IMR-90 (cell line): ENCODE measurements at regions of chr10 and their contacts with region 1.

Region 1: GRCh38 chr10:86755740-86756510 is 494 bp upstream of the BMPR1A start:
- DNase-seq: peak; percentile 82
- ATAC-seq: peak; percentile 91
- H3K4me3 ChIP-seq: peak overlapping the region; percentile 74
- H3K27ac ChIP-seq: peak overlapping the region; percentile 98
- H3K4me1 ChIP-seq: peaks cover 2% of the 10 kb centered on the region; the same call in 1 of the 2 replicates
- H3K27me3 ChIP-seq: no peaks in the 10 kb centered on the region
- CTCF ChIP-seq: no peak
- POLR2A ChIP-seq: peak; percentile 83
- RAD21 ChIP-seq: no peak

Region 2: DNA sequence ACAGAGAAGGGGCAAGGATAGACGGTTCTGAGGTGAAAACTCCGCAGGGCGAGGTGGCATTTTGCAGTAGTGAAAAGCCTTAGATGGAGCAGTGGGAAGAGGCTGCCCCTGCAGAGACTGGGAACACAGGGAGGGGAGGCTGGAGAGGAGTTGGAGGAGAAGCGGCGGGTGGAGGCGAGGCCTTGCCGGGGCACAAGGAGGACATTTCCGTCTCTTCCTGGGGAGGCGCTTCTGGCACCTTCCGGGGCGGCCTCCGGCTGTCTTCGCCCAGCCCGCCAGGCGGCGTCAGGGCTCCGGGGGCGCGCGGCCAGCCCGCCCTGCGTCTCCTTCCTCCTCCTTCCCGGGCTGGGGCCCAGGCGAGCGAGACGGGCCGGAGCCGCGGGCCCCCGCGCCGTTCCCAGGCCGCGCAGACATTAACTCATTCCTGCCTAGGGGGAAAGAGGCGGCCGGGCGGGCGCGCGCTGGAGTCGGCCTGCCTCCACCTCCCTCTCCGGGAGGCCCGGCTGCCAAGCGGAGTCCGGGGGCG is 44.9 kb before region 1 on chr10:
- CTCF ChIA-PET with region 1: no interaction called
- POLR2A ChIA-PET with region 1: no interaction called
- dilution Hi-C with region 1: no loop called
- in situ Hi-C with region 1: no loop called
- intact Hi-C with region 1: loop called (anchors 1 kb)
- DNase-seq: peak; percentile 85
- ATAC-seq: peak; percentile 95
- H3K4me3 ChIP-seq: peak overlapping the region; percentile 51
- H3K27ac ChIP-seq: peak overlapping the region; percentile 71
- H3K4me1 ChIP-seq: peaks cover 8% of the 10 kb centered on the region
- H3K27me3 ChIP-seq: no peaks in the 10 kb centered on the region
- CTCF ChIP-seq: peak; percentile 98
- POLR2A ChIP-seq: peak; percentile 68
- RAD21 ChIP-seq: peak; percentile 87

Region 3: DNA sequence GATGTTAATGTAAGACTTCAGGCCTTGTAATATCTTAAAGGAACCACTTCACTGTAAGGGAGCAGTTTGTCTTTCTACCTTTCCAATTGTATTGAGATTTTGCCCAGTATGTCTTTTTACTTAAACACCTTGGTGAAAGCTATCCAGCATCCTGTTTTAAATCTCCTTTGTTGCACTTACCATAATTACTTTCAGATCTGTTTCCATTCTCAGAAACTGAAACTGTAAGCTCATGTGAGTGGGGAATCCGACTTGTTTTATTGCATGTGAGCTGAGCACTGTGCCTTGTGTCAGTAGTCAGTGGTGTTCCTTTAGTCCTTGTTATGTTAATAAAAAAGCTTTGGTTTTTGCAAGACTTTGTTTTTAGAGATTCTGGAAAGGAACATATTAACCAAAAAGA is 42.7 kb after region 1 on chr10:
- CTCF ChIA-PET with region 1: no interaction called
- POLR2A ChIA-PET with region 1: no interaction called
- dilution Hi-C with region 1: no loop called
- in situ Hi-C with region 1: no loop called
- intact Hi-C with region 1: no loop called
- DNase-seq: peak; percentile 51
- ATAC-seq: no peak
- H3K4me3 ChIP-seq: no peak overlapping the region
- H3K27ac ChIP-seq: no peak overlapping the region
- H3K4me1 ChIP-seq: peaks cover 7% of the 10 kb centered on the region
- H3K27me3 ChIP-seq: no peaks in the 10 kb centered on the region
- CTCF ChIP-seq: no peak
- POLR2A ChIP-seq: no peak
- RAD21 ChIP-seq: no peak

Region 4: GRCh38 chr10:86868353-86868752 is 112.4 kb after region 1 on chr10:
- CTCF ChIA-PET with region 1: interaction called, 3 read pairs
- POLR2A ChIA-PET with region 1: no interaction called
- dilution Hi-C with region 1: no loop called
- in situ Hi-C with region 1: no loop called
- intact Hi-C with region 1: loop called (anchors 5 kb)
- DNase-seq: peak; percentile 47
- ATAC-seq: peak; percentile 62
- H3K4me3 ChIP-seq: no peak overlapping the region
- H3K27ac ChIP-seq: no peak overlapping the region
- H3K4me1 ChIP-seq: peaks cover 13% of the 10 kb centered on the region
- H3K27me3 ChIP-seq: no peaks in the 10 kb centered on the region
- CTCF ChIP-seq: no peak
- POLR2A ChIP-seq: no peak
- RAD21 ChIP-seq: no peak